ENCODE measurements at regions of chr12 and their contacts with region 1.

Region 1: DNA sequence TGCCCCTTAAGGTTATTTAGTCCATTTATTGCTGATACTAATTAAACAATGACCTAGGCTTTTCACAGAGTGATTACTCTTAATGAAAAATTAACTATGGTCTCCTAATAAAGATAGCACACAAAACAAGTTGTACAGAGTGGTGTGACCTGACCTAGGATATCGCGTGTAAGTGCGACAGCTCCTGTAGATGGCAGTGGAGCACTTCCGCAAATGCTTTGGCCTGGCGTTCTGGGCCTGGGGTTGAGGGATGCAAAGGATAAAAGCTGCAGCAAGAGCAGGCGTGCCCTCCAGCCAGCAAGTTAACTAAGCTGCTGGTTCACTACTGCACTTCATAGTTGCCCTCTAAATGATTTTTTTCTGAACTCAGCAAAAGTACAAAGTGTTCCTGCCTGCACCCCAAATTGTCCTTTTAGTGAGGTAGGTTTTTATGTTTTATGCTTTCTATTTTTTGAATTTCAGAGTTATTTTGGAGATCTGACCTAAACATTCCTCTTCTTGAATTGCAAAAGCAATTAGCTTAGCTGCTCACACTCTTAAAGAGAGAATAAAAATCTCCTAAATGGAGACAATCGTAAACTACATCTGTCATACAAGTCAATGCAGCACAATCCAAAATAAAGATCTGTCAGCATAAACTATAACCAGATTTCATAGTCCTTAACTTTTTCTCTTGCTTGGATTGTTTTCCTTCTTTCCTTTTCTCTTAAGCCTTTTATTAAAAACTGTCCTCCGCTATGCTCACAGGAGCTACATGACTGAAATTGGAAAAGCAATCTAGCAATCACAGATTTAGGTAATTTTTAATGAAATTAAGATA is 379.6 kb downstream of the LRIG3 start:
- DNase-seq: peak; percentile 89
- H3K4me3 ChIP-seq: no peak overlapping the region
- H3K27ac ChIP-seq: no peak overlapping the region
- H3K4me1 ChIP-seq: peaks cover 10% of the 10 kb centered on the region
- H3K27me3 ChIP-seq: no peaks in the 10 kb centered on the region
- CTCF ChIP-seq: peak; percentile 76 to 79
- POLR2A ChIP-seq: no peak

Region 2: DNA sequence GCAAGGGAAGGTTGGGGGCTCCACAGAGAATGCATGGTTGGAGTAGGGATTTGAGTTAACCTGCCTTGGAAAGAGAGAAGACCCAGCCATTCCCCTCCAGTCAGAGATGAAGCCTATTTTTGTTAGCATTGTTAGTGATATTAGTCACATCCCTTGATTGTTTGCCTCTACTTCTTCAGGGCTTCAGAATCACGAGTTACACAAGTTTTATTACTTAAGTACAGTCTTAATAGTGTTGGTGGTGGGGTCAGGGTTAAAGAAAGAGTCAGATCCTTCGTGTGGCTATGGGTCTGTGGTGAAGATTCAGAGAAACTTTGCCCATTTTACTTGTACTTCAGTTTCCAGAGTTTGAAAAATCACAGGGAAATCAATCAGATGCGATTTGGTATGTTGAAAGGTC is 16.5 kb after region 1 on chr12:
- CTCF ChIA-PET with region 1: interaction called, 30 read pairs
- POLR2A ChIA-PET with region 1: no interaction called
- dilution Hi-C with region 1: no loop called
- intact Hi-C with region 1: no loop called
- DNase-seq: peak; percentile 95
- H3K4me3 ChIP-seq: no peak overlapping the region
- H3K27ac ChIP-seq: peak overlapping the region; percentile 87
- H3K4me1 ChIP-seq: peaks cover 13% of the 10 kb centered on the region
- H3K27me3 ChIP-seq: no peaks in the 10 kb centered on the region
- CTCF ChIP-seq: no peak
- POLR2A ChIP-seq: peak; percentile 23

Region 3: DNA sequence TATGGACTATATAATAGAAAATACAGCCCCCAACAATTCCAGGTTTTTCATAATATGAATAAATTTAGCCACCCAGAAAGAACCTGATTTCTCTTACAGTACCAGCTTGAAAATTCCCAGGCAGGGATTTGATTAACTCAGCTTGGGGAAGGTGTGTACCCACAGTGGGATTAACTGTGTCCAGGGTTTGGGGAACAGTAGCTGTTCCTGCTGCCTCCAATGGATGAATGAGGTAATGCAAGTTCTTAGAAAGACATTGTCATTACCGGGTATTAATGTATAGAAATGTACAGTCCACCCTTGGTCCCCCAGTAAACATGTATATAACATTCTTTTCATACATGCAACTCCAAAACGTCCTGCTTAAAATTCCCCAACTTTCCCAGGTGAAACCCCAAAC is 264.1 kb after region 1 on chr12:
- CTCF ChIA-PET with region 1: interaction called, 27 read pairs
- POLR2A ChIA-PET with region 1: no interaction called
- dilution Hi-C with region 1: no loop called
- intact Hi-C with region 1: no loop called
- DNase-seq: peak; percentile 6
- H3K4me3 ChIP-seq: no peak overlapping the region
- H3K27ac ChIP-seq: no peak overlapping the region
- H3K4me1 ChIP-seq: no peaks in the 10 kb centered on the region
- H3K27me3 ChIP-seq: peaks cover 0 to 2% of the 10 kb centered on the region in 2 experiments
- CTCF ChIP-seq: peak; percentile 36 to 41
- POLR2A ChIP-seq: no peak

Region 4: GRCh38 chr12:58877242-58877743 is 336.6 kb after region 1 on chr12:
- CTCF ChIA-PET with region 1: interaction called, 34 read pairs
- POLR2A ChIA-PET with region 1: no interaction called
- dilution Hi-C with region 1: no loop called
- intact Hi-C with region 1: no loop called
- DNase-seq: no peak
- H3K4me3 ChIP-seq: no peak overlapping the region
- H3K27ac ChIP-seq: no peak overlapping the region
- H3K4me1 ChIP-seq: no peaks in the 10 kb centered on the region
- H3K27me3 ChIP-seq: no peaks in the 10 kb centered on the region
- CTCF ChIP-seq: no peak
- POLR2A ChIP-seq: no peak

Region 5: DNA sequence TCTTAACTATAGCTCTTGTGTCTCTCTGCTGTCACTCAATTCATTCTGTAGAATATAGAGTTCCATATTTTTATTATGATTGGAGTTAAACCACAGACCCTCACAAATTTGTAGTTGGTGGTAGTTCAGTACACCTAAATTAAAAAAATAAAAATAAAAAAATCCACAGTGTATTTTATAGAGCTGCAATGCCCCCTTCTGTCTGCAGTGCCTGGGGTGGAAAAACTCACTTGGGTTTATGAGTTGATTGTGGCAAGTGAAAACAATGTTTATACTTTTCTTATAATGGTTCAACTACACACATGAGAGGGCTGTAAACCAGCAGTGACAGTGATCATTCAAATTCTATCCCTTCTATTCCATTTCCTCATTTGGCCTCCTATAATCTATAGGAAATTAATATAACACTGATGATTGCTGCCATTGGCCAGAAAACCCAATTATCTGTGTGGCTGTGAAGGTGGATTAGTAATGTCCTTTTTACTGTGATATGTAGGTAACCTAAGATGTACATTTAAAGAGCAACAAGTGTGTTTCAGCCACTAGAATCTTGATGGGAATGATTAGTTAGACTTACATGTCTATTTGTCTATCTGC is 546.5 kb after region 1 on chr12:
- CTCF ChIA-PET with region 1: interaction called, 164 read pairs
- POLR2A ChIA-PET with region 1: no interaction called
- dilution Hi-C with region 1: no loop called
- intact Hi-C with region 1: loop called (anchors 1 kb)
- DNase-seq: peak; percentile 55
- H3K4me3 ChIP-seq: no peak overlapping the region
- H3K27ac ChIP-seq: no peak overlapping the region
- H3K4me1 ChIP-seq: peaks cover 12% of the 10 kb centered on the region
- H3K27me3 ChIP-seq: no peaks in the 10 kb centered on the region
- CTCF ChIP-seq: peak; percentile 54 to 59
- POLR2A ChIP-seq: no peak

Region 6: GRCh38 chr12:59164991-59165718 is 624.5 kb after region 1 on chr12:
- CTCF ChIA-PET with region 1: interaction called, 38 read pairs
- POLR2A ChIA-PET with region 1: no interaction called
- dilution Hi-C with region 1: no loop called
- intact Hi-C with region 1: no loop called
- DNase-seq: peak; percentile 41
- H3K4me3 ChIP-seq: no peak overlapping the region
- H3K27ac ChIP-seq: no peak overlapping the region
- H3K4me1 ChIP-seq: no peaks in the 10 kb centered on the region
- H3K27me3 ChIP-seq: no peaks in the 10 kb centered on the region
- CTCF ChIP-seq: peak; percentile 17 to 30
- POLR2A ChIP-seq: no peak